ENCODE measurements at regions of chr17 and their contacts with region 1.

Region 1: DNA sequence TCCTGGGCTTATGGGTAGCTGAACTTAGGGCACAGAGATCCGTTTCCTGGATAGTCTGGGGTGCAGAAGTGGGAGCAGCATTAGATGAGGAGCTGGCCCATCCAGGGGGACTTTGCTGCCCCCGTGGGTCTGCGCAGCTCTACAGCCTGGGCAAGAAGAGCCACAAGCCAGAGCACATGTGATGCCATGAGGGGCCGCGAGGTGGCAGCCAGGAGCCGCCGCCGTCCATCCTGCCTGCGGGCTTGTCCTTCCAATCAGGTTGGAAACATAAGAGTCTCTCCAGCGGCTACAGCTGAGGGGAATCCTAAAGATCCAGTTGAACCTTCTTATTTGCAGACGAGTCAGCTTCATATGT is 21.9 kb downstream of the C1QTNF1 start:
- DNase-seq: no peak
- H3K4me3 ChIP-seq: no peak overlapping the region
- CTCF ChIP-seq: peak; percentile 98

Region 2: GRCh38 chr17:78637643-78638420 is 408.0 kb before region 1 on chr17:
- CTCF ChIA-PET with region 1: no interaction called
- POLR2A ChIA-PET with region 1: no interaction called
- DNase-seq: no peak
- H3K4me3 ChIP-seq: no peak overlapping the region
- CTCF ChIP-seq: no peak

Region 3: GRCh38 chr17:79019632-79020584 is 25.9 kb before region 1 on chr17:
- CTCF ChIA-PET with region 1: interaction called, 160 read pairs
- POLR2A ChIA-PET with region 1: no interaction called
- DNase-seq: no peak
- H3K4me3 ChIP-seq: no peak overlapping the region
- CTCF ChIP-seq: peak; percentile 35

Region 4: DNA sequence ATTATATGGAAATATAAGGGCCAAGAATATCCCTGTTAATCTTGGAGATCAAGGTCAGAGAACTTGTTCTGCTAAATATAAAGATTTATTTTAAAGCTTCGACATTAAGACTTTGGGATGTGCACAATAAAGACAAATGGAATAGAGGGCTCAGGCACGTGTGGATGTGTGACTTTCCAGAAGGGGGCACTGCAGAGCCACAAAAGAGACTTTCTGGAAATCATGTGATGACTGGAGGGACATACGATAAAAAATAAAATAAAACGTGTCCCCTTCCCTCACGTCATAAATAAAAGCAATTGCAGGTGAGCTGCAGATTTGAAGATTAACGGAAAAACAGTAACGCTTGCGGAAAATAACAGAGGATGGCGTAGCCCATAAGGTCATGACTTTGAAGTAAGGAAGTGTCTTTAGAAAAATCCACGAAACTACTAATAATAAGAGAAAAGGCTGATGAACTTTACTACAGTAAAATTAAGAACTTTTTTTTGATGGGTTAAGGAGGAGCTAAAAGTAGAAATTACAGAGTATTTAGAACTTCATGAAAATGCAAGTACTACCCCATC is 19.4 kb after region 1 on chr17:
- CTCF ChIA-PET with region 1: interaction called, 39 read pairs
- POLR2A ChIA-PET with region 1: no interaction called
- DNase-seq: no peak
- H3K4me3 ChIP-seq: no peak overlapping the region
- CTCF ChIP-seq: peak; percentile 40

Region 5: DNA sequence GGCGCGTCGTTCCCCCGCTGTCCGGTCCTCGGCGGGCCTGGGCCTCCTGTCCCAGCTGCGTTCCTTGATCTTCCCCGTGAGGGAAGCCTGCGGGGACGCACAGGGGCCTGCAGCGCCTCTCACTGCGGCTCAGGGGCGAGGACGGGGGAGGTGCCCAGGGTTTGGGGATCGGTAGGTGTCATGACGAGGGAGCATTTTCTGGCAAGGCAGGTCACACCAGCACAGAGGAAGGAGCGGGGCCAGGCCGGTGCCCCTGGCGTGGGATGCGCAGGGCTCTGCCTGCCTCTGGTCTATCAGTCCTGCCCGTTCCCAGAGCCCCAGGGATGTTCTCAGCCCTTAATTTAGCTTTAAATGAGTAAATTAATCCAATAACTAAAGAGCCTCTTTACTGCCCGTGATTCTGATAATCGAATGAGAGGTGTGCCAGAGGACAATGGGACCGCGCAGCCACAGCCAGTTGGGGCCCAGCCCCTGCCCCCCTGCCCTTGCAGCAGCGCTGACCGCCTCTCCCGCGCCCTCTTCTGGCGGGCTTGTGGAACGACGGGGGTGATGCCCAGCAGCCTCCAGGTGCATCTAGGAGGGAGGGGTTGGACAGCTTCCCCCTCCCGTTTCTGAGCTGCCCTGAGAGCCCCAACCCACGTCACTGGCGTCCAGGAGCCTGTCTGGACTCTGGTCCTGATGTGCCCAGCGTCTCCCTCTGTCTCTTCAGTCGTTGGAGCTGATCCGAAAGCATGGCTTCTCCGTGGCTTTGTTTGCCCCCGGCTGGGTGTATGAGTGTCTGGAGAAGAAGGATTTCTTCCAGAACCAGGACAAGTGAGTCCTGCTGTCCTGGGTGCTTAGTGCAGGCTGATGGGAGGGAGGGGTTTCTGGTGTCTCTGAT is 36.7 kb after region 1 on chr17:
- CTCF ChIA-PET with region 1: interaction called, 80 read pairs
- POLR2A ChIA-PET with region 1: no interaction called
- DNase-seq: no peak
- H3K4me3 ChIP-seq: no peak overlapping the region
- CTCF ChIP-seq: peak; percentile 94

Region 6: GRCh38 chr17:79349506-79350400 is 303.9 kb after region 1 on chr17:
- CTCF ChIA-PET with region 1: no interaction called
- POLR2A ChIA-PET with region 1: no interaction called
- DNase-seq: no peak
- H3K4me3 ChIP-seq: no peak overlapping the region
- CTCF ChIP-seq: no peak

Measured in AG04449 (cell line).